Activated CD8-positive, alpha-beta T cell treated with anti-CD3 and anti-CD28 coated beads, Interleukin-2, amount 10 ng/mL, durations not matched to agents 7 days and 5 days (primary cell): ENCODE measurements at regions of chr2 and their contacts with region 1.

Region 1: GRCh38 chr2:11583840-11584524 is 50.1 kb downstream of the GREB1 start:
- DNase-seq: peak; percentile 75
- ATAC-seq: peak; percentile 78
- H3K4me3 Mint-ChIP-seq: no peak overlapping the region
- H3K27ac Mint-ChIP-seq: no peak overlapping the region
- H3K4me1 Mint-ChIP-seq: no peaks in the 10 kb centered on the region
- H3K27me3 Mint-ChIP-seq: peaks cover 2% of the 10 kb centered on the region

Region 2: GRCh38 chr2:11477994-11478393 is 106.0 kb before region 1 on chr2:
- CTCF ChIA-PET with region 1: interaction called, 108 read pairs
- POLR2A ChIA-PET with region 1: no interaction called
- DNase-seq: peak; percentile 88
- ATAC-seq: peak; percentile 74
- H3K4me3 Mint-ChIP-seq: no peak overlapping the region
- H3K27ac Mint-ChIP-seq: no peak overlapping the region
- H3K4me1 Mint-ChIP-seq: peaks cover under 1% of the 10 kb centered on the region
- H3K27me3 Mint-ChIP-seq: peaks cover 25% of the 10 kb centered on the region

Region 3: GRCh38 chr2:11488809-11489208 is 95.2 kb before region 1 on chr2:
- CTCF ChIA-PET with region 1: interaction called, 25 read pairs
- POLR2A ChIA-PET with region 1: no interaction called
- DNase-seq: no peak
- ATAC-seq: no peak
- H3K4me3 Mint-ChIP-seq: no peak overlapping the region
- H3K27ac Mint-ChIP-seq: no peak overlapping the region
- H3K4me1 Mint-ChIP-seq: no peaks in the 10 kb centered on the region
- H3K27me3 Mint-ChIP-seq: peaks cover 30% of the 10 kb centered on the region

Region 4: DNA sequence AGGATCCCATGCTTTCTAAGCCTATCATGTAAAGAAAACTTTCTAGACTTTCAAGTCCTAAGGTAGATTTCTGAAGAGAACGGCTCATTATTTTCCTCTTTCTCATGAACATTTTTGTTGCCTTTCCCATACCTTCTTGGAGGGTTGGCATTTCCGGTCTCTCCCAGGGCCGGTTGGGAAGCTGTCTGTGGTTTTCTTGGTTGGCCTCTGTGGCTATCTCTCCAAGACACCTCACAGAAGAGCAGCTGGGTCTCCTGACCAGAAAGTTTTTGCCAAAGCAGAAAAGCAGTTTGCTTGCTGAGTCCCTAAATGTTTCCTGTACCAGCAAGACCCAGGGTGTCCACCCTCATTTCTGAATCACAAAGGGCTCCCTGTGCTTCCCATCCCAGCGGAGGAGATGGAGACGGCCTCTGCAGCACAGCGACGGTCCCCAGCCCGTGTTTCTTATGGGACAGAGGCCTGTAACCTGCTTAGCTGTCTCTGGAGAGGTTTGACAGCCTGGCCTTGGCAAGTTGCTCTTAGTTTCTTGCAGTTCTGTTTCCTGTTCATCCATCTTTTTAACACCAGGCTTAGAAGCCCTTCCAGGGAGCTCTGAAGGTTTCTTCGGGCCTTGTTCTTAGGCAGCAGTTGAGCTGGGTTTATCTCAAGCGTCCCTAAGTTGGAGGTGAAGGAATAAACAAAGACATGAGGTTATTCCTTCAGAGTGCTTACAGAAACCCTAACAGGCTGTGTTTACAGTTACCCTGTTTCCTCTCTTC is 10.4 kb before region 1 on chr2:
- CTCF ChIA-PET with region 1: interaction called, 15 read pairs
- POLR2A ChIA-PET with region 1: no interaction called
- DNase-seq: no peak
- ATAC-seq: no peak
- H3K4me3 Mint-ChIP-seq: no peak overlapping the region
- H3K27ac Mint-ChIP-seq: no peak overlapping the region
- H3K4me1 Mint-ChIP-seq: no peaks in the 10 kb centered on the region
- H3K27me3 Mint-ChIP-seq: no peaks in the 10 kb centered on the region

Region 5: DNA sequence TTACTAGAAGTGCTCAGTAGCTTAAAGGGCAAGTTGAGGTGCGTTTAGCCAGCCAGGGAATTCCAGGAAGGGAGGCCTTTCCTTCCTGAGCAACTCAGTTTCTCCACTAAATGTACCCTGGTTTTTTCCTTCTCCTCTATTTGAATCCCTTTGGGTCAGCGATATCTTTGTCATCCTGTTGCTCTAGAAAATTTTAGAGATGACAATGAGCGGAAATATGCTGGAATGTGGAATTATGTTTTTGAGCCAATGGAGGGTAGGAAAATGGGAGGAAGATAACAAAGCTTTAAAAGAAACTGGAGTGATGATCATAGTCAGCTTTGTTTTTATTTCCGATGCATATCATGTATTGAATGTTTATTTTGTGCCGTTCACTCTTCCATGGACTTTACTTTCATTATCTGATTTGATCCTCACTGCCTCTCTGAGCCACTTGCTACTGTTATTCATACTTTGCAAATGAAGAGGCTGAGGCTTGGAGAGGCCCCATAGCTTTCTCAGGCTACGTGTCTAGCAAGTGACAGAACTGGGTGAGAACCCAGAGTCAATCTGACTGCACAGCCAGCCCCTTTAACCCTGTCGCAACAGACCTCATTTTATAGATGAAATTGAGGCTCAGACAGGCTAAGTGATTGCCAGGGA is 18.7 kb after region 1 on chr2:
- CTCF ChIA-PET with region 1: interaction called, 16 read pairs
- POLR2A ChIA-PET with region 1: no interaction called
- DNase-seq: no peak
- ATAC-seq: no peak
- H3K4me3 Mint-ChIP-seq: no peak overlapping the region
- H3K27ac Mint-ChIP-seq: no peak overlapping the region
- H3K4me1 Mint-ChIP-seq: no peaks in the 10 kb centered on the region
- H3K27me3 Mint-ChIP-seq: no peaks in the 10 kb centered on the region

Region 6: GRCh38 chr2:11904029-11904428 is 320.0 kb after region 1 on chr2:
- CTCF ChIA-PET with region 1: no interaction called
- POLR2A ChIA-PET with region 1: no interaction called
- DNase-seq: no peak
- ATAC-seq: no peak
- H3K4me3 Mint-ChIP-seq: no peak overlapping the region
- H3K27ac Mint-ChIP-seq: no peak overlapping the region
- H3K4me1 Mint-ChIP-seq: no peaks in the 10 kb centered on the region
- H3K27me3 Mint-ChIP-seq: no peaks in the 10 kb centered on the region